ENCODE measurements at regions of chr11 and their contacts with region 1.

Region 1: GRCh38 chr11:79393362-79394043 is 47.3 kb downstream of the TENM4 start:
- DNase-seq: no peak
- ATAC-seq: no peak
- H3K4me3 ChIP-seq: no peak overlapping the region
- H3K4me3 Mint-ChIP-seq: no peak overlapping the region
- H3K27ac ChIP-seq: no peak overlapping the region
- H3K27ac Mint-ChIP-seq: no peak overlapping the region
- H3K4me1 ChIP-seq: no peaks in the 10 kb centered on the region
- H3K4me1 Mint-ChIP-seq: no peaks in the 10 kb centered on the region
- H3K27me3 ChIP-seq: no peaks in the 10 kb centered on the region
- H3K27me3 Mint-ChIP-seq: no peaks in the 10 kb centered on the region
- CTCF ChIP-seq: no peak

Region 2: GRCh38 chr11:79026803-79027445 is 366.6 kb before region 1 on chr11:
- intact Hi-C with region 1: no loop called
- DNase-seq: no peak
- ATAC-seq: no peak
- H3K4me3 ChIP-seq: no peak overlapping the region
- H3K4me3 Mint-ChIP-seq: no peak overlapping the region
- H3K27ac ChIP-seq: no peak overlapping the region
- H3K27ac Mint-ChIP-seq: no peak overlapping the region
- H3K4me1 ChIP-seq: no peaks in the 10 kb centered on the region
- H3K4me1 Mint-ChIP-seq: peaks cover 15 to 17% of the 10 kb centered on the region in 2 donors
- H3K27me3 ChIP-seq: peaks cover 12% of the 10 kb centered on the region
- H3K27me3 Mint-ChIP-seq: peaks cover 35 to 63% of the 10 kb centered on the region in 2 donors
- CTCF ChIP-seq: no peak

Region 3: DNA sequence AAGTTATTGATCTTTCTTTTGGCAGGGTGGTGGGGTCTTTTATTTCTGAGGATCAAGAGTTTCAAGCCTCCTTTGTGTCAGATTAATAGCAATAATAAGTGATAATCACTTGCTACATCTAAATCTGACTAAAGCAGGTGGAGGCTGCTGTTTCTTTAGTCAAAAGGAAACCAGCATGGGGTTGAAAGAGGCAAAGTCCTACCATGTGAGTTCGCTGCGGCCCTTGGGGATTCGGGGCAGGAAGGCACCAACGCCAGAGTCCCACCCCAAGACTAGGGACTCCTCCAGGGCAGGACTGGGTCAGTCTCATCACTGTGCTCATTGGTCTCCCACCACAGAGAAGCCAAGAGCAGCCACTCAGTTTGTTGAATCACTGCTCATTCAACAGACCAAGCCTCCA is 25.7 kb before region 1 on chr11:
- intact Hi-C with region 1: loop called (anchors 1 kb)
- DNase-seq: no peak
- ATAC-seq: no peak
- H3K4me3 ChIP-seq: no peak overlapping the region
- H3K4me3 Mint-ChIP-seq: no peak overlapping the region
- H3K27ac ChIP-seq: no peak overlapping the region
- H3K27ac Mint-ChIP-seq: no peak overlapping the region
- H3K4me1 ChIP-seq: no peaks in the 10 kb centered on the region
- H3K4me1 Mint-ChIP-seq: no peaks in the 10 kb centered on the region
- H3K27me3 ChIP-seq: no peaks in the 10 kb centered on the region
- H3K27me3 Mint-ChIP-seq: no peaks in the 10 kb centered on the region
- CTCF ChIP-seq: no peak

Measured in natural killer cell (primary cell).